CD4-positive, alpha-beta T cell (primary cell): ENCODE measurements at regions of chr1 and their contacts with region 1.

Region 1: GRCh38 chr1:33466159-33466558 is 6.3 kb upstream of the ZSCAN20 start:
- DNase-seq: no peak
- ATAC-seq: no peak
- H3K4me3 ChIP-seq: no peak overlapping the region
- H3K4me3 Mint-ChIP-seq: no peak overlapping the region
- H3K27ac ChIP-seq: no peak overlapping the region
- H3K27ac Mint-ChIP-seq: no peak overlapping the region
- H3K4me1 ChIP-seq: peaks cover 7% of the 10 kb centered on the region
- H3K4me1 Mint-ChIP-seq: peaks cover 14% of the 10 kb centered on the region
- H3K27me3 ChIP-seq: no peaks in the 10 kb centered on the region
- H3K27me3 Mint-ChIP-seq: no peaks in the 10 kb centered on the region
- CTCF ChIP-seq: no peak

Region 2: DNA sequence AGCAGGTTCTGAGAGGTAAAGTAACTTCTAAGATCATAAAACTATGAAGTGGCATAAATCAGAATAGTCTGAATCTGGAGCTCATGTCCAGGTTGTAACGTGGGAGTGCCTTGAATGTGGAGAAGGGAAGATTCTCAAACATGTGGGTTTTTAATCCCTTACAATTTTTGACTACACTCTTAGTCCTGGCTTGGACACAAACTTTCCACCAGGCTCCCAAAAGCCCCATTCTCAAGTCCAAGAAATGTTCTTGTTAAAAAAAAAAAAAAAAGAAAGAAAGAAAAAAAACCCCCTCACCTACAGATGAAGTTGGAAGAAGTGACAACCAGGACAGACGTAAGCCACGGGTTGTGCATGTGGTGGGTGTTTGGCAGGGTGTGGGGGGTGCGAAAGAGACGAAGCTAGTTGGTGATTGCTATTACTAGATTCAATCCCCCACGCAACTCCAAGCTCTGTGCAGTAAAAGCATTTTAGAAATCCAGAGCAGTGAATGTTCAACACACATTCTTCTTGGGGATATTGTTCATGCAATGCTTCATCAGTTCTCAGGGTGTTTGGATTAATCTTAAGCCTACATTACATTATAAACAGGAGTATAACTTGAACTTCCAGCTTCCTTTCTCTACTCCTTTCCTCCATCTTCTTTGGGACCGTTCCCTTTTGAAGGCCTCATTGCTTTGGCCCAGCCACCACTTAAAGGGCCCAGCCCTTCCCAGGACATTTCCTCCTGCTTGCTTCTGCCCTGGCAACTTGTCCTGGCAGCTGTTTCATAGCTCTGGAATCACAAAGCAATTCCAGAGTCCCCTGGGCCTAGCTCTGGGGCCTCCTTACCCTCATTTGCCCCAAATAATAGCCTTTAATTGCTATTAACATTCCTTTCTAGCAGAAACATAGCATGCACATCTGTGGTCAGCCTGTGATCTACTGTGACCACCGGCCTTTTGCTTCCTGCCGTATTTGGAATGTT is 77.1 kb before region 1 on chr1:
- CTCF ChIA-PET with region 1: no interaction called
- POLR2A ChIA-PET with region 1: no interaction called
- intact Hi-C with region 1: loop called in 1 of 2 experiments (anchors 5 kb)
- DNase-seq: no peak
- ATAC-seq: no peak
- H3K4me3 ChIP-seq: no peak overlapping the region
- H3K4me3 Mint-ChIP-seq: no peak overlapping the region
- H3K27ac ChIP-seq: no peak overlapping the region
- H3K27ac Mint-ChIP-seq: no peak overlapping the region
- H3K4me1 ChIP-seq: no peaks in the 10 kb centered on the region
- H3K4me1 Mint-ChIP-seq: no peaks in the 10 kb centered on the region
- H3K27me3 ChIP-seq: no peaks in the 10 kb centered on the region
- H3K27me3 Mint-ChIP-seq: peaks cover 19% of the 10 kb centered on the region
- CTCF ChIP-seq: no peak

Region 3: GRCh38 chr1:33500547-33500946 is 34.4 kb after region 1 on chr1:
- CTCF ChIA-PET with region 1: no interaction called
- POLR2A ChIA-PET with region 1: no interaction called
- intact Hi-C with region 1: no loop called
- DNase-seq: no peak
- ATAC-seq: no peak
- H3K4me3 ChIP-seq: no peak overlapping the region
- H3K4me3 Mint-ChIP-seq: no peak overlapping the region
- H3K27ac ChIP-seq: no peak overlapping the region
- H3K27ac Mint-ChIP-seq: no peak overlapping the region
- H3K4me1 ChIP-seq: no peaks in the 10 kb centered on the region
- H3K4me1 Mint-ChIP-seq: no peaks in the 10 kb centered on the region
- H3K27me3 ChIP-seq: no peaks in the 10 kb centered on the region
- H3K27me3 Mint-ChIP-seq: no peaks in the 10 kb centered on the region
- CTCF ChIP-seq: no peak